ENCODE measurements at regions of chr11 and their contacts with region 1.

Region 1: DNA sequence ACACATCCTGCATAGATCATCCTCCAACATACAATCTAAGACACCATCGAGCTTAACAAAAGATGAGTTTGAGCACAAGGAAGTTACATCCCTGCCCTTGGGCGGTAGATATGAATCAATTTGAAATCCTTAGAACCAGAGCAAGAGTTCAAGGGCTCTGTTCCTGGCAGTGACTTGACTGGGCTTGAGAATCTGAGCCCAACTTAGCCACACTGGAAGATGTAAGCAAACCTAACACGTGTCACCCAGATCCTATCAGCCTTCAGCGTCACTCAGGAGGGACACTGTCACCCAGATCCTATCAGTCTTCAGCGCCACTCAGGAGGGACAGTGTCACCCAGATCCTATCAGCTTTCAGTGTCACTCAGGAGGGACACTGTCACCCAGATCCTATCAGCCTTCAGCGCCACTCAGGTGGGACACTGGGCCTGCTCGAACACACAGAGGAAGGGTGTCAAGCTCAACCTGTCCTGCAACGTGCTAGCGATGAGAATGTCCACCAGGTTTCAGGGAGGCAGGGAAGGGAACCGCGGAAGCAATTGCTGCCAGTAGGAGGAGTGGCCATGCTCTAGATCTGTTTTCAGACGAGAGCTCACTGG is 32.8 kb upstream of the CTSD start:
- DNase-seq: no peak
- H3K4me3 Mint-ChIP-seq: no peak overlapping the region
- H3K27ac Mint-ChIP-seq: no peak overlapping the region
- H3K4me1 Mint-ChIP-seq: peaks cover 2% of the 10 kb centered on the region
- H3K27me3 Mint-ChIP-seq: peaks cover 16% of the 10 kb centered on the region

Region 2: DNA sequence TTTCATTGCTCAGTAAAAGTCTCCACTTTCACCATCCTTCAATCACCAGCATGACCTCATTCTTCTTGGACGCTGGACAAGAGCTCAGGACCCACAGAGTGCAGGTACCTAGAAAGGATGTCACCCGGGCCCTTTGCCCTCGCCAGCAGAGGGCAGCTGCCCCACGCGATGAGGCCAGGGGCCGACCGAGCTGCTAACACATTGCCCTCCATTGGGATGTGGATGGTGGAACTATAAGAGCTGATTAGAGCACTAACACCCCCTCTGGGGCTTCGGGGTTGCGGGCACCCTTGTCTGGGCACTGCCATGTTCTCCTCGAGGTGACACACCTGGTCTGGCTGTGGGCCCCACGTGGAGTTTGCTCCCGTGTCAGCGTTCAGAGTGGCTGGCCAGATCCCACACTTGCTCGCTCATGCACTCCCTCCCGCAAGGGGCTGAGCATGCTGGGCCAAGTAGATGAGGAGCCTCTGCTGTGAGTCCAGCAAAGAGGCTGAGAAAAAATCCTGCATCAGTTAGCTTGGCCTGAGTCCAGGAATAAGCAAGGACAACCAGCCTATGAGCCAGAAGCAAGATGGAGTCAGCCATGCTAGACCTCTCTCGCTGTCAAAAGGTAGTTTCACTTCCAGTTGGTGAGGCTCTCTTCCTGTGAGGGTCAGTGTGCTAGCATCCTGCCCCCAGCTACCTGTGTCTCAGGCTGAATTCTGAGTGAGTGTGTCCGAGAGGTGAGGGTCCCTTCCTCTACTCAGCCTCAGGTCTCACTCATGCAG is 89.7 kb before region 1 on chr11:
- CTCF ChIA-PET with region 1: no interaction called
- POLR2A ChIA-PET with region 1: no interaction called
- intact Hi-C with region 1: loop called (anchors 10 kb)
- DNase-seq: peak; percentile 45
- H3K4me3 Mint-ChIP-seq: no peak overlapping the region
- H3K27ac Mint-ChIP-seq: no peak overlapping the region
- H3K4me1 Mint-ChIP-seq: no peaks in the 10 kb centered on the region
- H3K27me3 Mint-ChIP-seq: no peaks in the 10 kb centered on the region